Body of pancreas (tissue), 4 donors: ENCODE measurements at regions of chr17 and their contacts with region 1.

Region 1: DNA sequence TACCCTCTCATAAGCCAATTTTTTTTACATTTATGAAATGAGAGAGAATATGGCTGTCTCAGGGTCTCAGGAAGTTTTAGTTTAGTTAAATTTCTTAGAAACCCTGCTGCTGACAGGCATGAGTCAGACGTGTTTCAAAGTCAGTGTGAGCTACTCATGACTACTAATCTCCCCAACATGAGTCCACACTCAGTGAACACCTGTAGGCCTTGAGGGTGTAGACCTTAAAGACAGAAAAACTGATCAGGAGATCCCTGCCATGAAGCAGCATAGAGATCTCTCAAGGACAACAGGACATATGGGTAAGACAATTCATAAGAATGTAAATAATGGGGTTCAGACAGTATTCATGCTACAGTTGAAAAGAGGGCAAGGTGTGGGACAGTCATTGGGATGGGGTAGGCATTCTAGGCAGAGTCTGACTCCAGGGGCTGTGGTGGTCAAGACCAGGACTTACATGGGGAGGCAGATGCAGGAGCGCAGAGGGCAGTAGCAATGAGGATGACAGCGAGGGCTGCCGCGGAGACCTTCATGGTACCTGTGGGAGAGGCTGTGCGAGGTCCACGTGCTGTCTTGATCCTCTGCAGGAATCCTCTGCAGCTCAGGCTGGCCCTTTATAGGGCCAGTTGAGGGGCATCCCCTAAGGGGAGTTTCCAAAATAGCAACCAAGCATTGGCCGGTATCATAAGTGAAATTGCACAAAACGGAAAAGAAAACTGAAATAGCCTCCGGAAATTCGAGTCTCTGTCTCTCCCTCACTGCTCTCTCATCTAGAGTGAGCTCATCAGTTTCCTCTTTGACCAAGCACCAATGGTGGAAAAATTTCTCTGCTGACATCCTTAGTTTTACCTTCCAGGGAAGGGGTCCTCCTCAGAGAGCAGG is at the start of gene CCL5:
- DNase-seq: peak in 1 of 4 donors; percentile 8
- ATAC-seq: no peak
- H3K4me3 ChIP-seq: no peak within 1 kb of the TSS
- H3K27ac ChIP-seq: no peak within 1 kb of the TSS
- H3K4me1 ChIP-seq: no peaks in the 10 kb centered on the region
- H3K27me3 ChIP-seq: no peaks in the 10 kb centered on the region
- CTCF ChIP-seq: no peak
- POLR2A ChIP-seq: peak in 2 of 3 donors; percentile 40 to 41
- total RNA-seq, gene CCL5: 0.66 to 4.9 TPM

Region 2: DNA sequence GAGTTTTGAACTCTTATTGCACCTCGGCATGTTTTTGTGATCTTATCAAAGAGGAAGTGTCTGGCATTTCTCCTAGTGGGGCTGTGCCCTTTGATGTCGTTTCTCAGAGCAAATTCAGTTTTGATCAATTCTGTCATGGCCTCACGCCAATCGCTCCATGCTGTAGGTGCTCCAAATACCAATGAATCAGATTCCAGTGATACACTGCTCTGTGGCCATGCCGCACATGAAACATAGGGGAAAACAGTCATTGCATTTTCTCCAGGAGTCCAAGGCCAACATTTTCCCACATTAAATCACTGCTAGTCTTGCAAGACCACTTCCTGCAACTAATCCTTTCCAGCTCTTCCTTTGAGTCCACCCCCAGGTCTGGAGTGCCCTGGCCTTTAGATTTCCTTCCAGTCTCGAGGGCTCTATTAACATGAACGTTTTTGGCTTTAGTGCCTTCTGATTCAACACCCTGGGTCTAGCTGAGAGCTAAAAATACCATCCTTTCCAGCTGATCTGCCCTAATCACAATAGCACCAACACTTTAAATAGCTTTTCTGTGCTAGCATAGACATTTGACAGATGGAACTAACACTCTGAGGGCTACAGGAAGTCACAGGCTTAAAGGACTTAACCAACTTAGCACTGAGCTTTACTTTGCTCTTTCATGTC is 166.8 kb before region 1 on chr17:
- intact Hi-C with region 1: no loop called
- DNase-seq: peak; percentile 55 to 72 (median 66)
- ATAC-seq: peak; percentile 59
- H3K4me3 ChIP-seq: no peak overlapping the region
- H3K27ac ChIP-seq: peak overlapping the region; percentile 10 to 72 (median 56)
- H3K4me1 ChIP-seq: peaks cover 48% of the 10 kb centered on the region
- H3K27me3 ChIP-seq: no peaks in the 10 kb centered on the region
- CTCF ChIP-seq: no peak
- POLR2A ChIP-seq: no peak

Region 3: DNA sequence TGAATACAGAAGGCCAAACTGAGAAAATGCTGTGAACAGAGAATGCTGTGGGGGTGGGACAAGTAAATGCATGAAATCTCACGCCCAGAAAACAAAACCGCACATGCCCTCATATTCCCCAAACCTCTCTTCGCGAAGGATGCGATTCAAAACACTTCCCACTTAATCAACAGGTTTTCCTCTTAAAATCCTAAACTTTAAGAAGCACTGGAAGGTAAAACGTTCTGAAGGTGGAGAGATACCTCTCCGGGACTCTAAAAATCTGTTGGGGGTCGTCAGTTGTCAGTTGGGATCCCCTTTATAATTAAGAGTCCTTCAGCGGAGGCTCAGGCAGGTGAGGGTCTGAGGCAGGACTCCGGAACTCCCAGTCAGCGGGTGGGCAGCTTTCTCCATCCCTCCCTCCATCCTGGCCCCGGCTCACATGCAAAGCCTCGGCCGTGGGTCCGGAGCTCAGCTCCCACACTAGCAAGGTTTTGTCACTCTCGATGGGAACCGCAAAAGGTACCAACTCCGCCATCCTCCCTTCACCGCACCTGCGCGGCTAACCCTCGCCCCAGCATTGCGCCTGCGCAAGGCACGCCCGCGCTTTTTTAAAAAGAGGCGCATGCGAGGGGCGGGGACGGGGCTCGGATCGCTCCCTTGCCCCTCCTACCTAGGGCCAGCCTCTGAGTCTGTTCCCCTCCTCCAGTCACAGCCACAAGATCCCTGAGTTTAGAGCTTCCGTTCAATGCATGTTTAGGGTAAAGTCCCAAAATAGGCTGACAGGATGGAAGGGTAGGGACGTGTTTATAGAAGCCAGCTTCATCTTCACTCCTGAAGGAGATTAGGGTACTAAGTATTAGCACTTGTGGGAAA is 50.4 kb after region 1 on chr17 and contains the start of gene RDM1:
- intact Hi-C with region 1: loop called (anchors 10 kb)
- DNase-seq: peak; percentile 45 to 62 (median 52)
- ATAC-seq: peak; percentile 24
- H3K4me3 ChIP-seq: peak within 1 kb of the TSS in 1 of 2 donors; percentile 10
- H3K27ac ChIP-seq: no peak within 1 kb of the TSS
- H3K4me1 ChIP-seq: peaks cover 10% of the 10 kb centered on the region
- H3K27me3 ChIP-seq: no peaks in the 10 kb centered on the region
- CTCF ChIP-seq: no peak
- POLR2A ChIP-seq: no peak
- total RNA-seq, gene RDM1: not detected